ENCODE measurements at regions of chr15 and their contacts with region 1.

Region 1: DNA sequence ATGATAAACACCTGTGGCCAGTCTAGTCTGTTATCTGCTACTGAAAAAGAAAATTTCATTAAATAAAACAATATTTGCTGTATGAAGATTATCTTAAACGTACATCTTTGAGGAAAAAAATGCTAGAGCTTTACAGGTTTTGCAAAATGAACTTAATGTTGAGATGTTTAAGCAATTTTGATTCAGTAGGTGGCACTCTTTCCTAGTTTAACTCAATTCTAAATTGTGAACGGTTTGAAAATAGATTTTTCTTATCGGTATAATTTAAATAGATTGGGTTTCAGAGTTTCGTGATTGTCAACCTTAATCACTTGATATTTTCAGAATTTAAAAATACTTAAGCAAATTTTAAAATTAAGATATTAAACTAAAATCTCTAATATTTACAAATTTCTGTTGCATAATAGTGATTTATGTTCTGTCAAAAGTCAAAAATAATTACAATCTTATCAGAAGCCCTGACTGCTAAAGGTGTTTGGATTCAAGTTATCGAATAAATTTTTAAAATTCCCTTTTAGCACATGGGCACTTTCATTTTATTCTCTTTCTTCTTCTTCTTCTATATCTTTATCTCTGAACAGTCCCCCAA is 7.0 kb upstream of the RNF111 start:
- DNase-seq: no peak
- H3K4me3 Mint-ChIP-seq: no peak overlapping the region
- H3K27ac Mint-ChIP-seq: peak overlapping the region; percentile 14
- H3K4me1 Mint-ChIP-seq: peaks cover 50% of the 10 kb centered on the region
- H3K27me3 Mint-ChIP-seq: peaks cover 8% of the 10 kb centered on the region

Region 2: GRCh38 chr15:58933281-58934113 is 46.9 kb before region 1 on chr15 and contains the start of gene SLTM:
- intact Hi-C with region 1: loop called (anchors 1 kb)
- DNase-seq: peak; percentile 88
- H3K4me3 Mint-ChIP-seq: peak within 1 kb of the TSS; percentile 98
- H3K27ac Mint-ChIP-seq: peak within 1 kb of the TSS; percentile 100
- H3K4me1 Mint-ChIP-seq: peaks cover 34% of the 10 kb centered on the region
- H3K27me3 Mint-ChIP-seq: no peaks in the 10 kb centered on the region
- total RNA-seq, gene SLTM: 142 and 143 TPM in 2 replicates

Region 3: DNA sequence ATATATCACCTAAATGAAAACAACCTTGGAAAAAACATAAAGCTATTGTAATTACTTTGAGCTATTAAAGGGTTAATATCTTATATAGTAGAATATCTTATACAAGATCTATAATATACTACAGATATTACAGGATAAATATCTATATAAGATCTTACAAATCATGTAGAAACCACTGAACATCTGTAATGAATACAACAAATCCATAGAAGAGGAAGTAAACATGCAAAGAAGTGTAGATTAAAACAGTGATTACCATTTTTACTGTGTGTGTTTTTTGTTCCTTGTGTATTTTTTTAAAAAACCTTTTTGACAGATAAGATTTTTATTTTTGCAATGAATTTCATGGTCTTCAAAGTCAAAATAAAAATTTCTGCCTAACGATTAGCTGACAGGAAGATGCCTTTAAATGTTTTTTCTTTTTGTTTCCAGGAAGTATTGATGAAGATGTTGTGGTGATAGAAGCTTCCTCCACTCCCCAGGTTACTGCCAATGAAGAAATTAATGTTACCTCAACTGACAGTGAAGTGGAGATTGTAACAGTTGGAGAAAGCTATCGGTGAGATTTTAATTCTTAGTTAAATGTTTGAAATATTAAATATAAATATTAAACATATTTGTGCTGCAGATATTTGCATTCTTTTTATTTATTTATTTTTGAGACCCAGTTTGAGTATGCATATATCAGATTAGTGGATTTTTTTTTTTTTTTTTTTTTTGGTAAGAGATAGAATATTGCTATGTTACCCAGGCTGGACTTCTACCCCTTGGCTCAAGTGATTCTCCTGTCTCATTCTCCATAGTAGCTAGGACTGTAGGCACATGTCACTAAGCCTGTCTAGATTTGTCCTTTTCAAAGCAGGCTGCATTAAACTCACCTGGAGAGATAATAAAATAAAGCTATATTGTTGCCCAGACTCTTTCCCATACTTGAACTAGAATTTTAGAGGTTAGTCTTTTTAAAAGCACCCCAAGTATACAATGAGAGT is 71.7 kb after region 1 on chr15:
- intact Hi-C with region 1: loop called (anchors 5 kb)
- DNase-seq: no peak
- H3K4me3 Mint-ChIP-seq: peak overlapping the region; percentile 34
- H3K27ac Mint-ChIP-seq: peak overlapping the region; percentile 76
- H3K4me1 Mint-ChIP-seq: peaks cover 37% of the 10 kb centered on the region
- H3K27me3 Mint-ChIP-seq: no peaks in the 10 kb centered on the region

Region 4: GRCh38 chr15:59138243-59138642 is 157.8 kb after region 1 on chr15:
- intact Hi-C with region 1: loop called (anchors 1 kb)
- DNase-seq: peak; percentile 37
- H3K4me3 Mint-ChIP-seq: no peak overlapping the region
- H3K27ac Mint-ChIP-seq: peak overlapping the region; percentile 88
- H3K4me1 Mint-ChIP-seq: peaks cover 48% of the 10 kb centered on the region
- H3K27me3 Mint-ChIP-seq: no peaks in the 10 kb centered on the region

Region 5: GRCh38 chr15:59299929-59300617 is 319.6 kb after region 1 on chr15:
- intact Hi-C with region 1: loop called (anchors 1 kb)
- DNase-seq: peak; percentile 64
- H3K4me3 Mint-ChIP-seq: peak overlapping the region; percentile 55
- H3K27ac Mint-ChIP-seq: peak overlapping the region; percentile 81
- H3K4me1 Mint-ChIP-seq: peaks cover 63% of the 10 kb centered on the region
- H3K27me3 Mint-ChIP-seq: peaks cover 3% of the 10 kb centered on the region

Region 6: GRCh38 chr15:59528965-59529402 is 548.5 kb after region 1 on chr15:
- intact Hi-C with region 1: loop called (anchors 1 kb)
- DNase-seq: peak; percentile 56
- H3K4me3 Mint-ChIP-seq: no peak overlapping the region
- H3K27ac Mint-ChIP-seq: no peak overlapping the region
- H3K4me1 Mint-ChIP-seq: peaks cover 21% of the 10 kb centered on the region
- H3K27me3 Mint-ChIP-seq: peaks cover 7% of the 10 kb centered on the region

Measured in activated T-helper 1 cell treated with anti-CD3 and anti-CD28 coated beads, Interleukin-12 subunit alpha, Interleukin-12 subunit beta, Interleukin-2, Interleukin-4 antibody, amounts not matched to agents 30 ng/mL and 10 ng/mL and 1 ng/mL, durations not matched to agents 14 hours and 24 hours and 36 hours (primary cell).